ENCODE measurements at regions of chr19 and their contacts with region 1.

Region 1: GRCh38 chr19:10074153-10074552 is 12.0 kb upstream of the SHFL start:
- DNase-seq: peak; percentile 22
- H3K4me3 Mint-ChIP-seq: no peak overlapping the region
- H3K27ac Mint-ChIP-seq: no peak overlapping the region
- H3K4me1 Mint-ChIP-seq: no peaks in the 10 kb centered on the region
- H3K27me3 Mint-ChIP-seq: peaks cover 18% of the 10 kb centered on the region

Region 2: DNA sequence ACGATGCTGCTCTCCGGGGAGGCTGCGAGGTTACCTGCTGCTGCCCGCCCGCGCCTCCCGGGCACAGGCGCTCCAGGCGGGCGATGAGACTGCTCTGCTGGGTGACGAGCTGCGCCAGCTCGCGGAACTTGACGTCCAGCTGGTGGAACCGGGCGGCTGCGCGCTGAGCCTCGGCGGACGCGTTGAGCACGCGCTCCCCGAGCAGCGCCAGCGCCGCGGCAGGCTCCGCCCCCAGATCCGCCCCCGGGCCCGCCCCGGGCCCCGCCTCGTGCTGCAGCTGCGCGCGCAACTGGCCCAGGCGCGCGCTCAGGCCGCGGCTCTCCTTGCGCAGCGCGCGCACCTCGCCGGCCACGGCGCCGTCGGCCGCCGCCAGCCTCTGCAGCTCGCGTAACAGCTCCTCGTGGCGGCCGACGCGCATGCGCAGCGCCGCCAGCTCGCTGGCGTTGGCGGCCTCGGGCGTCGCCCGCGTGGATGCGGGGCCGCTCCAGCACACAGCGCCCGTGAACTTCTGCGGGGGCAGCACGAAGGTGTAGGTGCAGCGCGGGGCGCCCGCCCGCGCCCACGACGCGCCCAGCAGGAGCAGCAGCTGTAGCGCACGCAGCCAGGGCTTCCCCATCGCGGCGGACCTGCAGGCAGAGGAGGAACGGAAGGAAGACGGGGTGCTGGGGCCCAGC is 21.9 kb after region 1 on chr19:
- intact Hi-C with region 1: no loop called
- DNase-seq: peak; percentile 91
- H3K4me3 Mint-ChIP-seq: peak overlapping the region; percentile 49
- H3K27ac Mint-ChIP-seq: peak overlapping the region; percentile 79
- H3K4me1 Mint-ChIP-seq: peaks cover 21% of the 10 kb centered on the region
- H3K27me3 Mint-ChIP-seq: no peaks in the 10 kb centered on the region

Region 3: GRCh38 chr19:10112895-10113591 is 38.9 kb after region 1 on chr19:
- intact Hi-C with region 1: loop called (anchors 1 kb)
- DNase-seq: peak; percentile 41
- H3K4me3 Mint-ChIP-seq: peak overlapping the region; percentile 70
- H3K27ac Mint-ChIP-seq: peak overlapping the region; percentile 90
- H3K4me1 Mint-ChIP-seq: peaks cover 28% of the 10 kb centered on the region
- H3K27me3 Mint-ChIP-seq: no peaks in the 10 kb centered on the region

Region 4: DNA sequence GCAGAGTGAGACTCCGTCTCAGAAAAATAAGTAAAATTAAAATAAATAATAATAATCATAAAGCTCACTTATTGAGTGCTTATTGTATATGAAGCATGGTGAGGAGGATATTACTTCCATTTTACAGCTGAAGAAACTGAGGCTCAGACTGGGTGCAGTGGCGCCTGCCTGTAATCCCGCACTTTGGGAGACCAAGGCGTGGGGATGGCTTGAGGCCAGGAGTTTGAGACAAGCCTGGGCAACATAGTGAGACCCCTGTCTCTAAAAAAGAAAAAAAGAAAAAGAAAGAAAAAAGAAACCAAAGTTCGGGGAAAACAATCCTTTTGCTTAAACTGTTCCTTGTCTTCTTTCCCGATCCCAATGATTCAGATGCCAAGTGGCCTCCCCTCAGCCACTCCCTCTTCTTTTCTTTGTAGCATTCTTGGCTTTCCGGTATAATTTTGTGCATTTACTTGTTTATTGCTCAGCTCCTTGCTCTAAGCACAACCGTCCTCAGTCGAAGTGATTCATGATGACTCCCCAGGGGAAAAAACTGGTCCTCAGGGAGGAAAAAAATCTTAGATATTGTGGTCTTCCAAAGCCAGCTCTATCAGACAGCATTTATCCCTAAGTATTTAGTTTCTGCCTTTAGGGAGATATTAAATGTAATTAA is 46.5 kb after region 1 on chr19:
- intact Hi-C with region 1: loop called (anchors 1 kb)
- DNase-seq: no peak
- H3K4me3 Mint-ChIP-seq: no peak overlapping the region
- H3K27ac Mint-ChIP-seq: no peak overlapping the region
- H3K4me1 Mint-ChIP-seq: peaks cover 11% of the 10 kb centered on the region
- H3K27me3 Mint-ChIP-seq: no peaks in the 10 kb centered on the region